Left cardiac atrium (tissue), 4 donors: ENCODE measurements at regions of chr13 and their contacts with region 1.

Region 1: DNA sequence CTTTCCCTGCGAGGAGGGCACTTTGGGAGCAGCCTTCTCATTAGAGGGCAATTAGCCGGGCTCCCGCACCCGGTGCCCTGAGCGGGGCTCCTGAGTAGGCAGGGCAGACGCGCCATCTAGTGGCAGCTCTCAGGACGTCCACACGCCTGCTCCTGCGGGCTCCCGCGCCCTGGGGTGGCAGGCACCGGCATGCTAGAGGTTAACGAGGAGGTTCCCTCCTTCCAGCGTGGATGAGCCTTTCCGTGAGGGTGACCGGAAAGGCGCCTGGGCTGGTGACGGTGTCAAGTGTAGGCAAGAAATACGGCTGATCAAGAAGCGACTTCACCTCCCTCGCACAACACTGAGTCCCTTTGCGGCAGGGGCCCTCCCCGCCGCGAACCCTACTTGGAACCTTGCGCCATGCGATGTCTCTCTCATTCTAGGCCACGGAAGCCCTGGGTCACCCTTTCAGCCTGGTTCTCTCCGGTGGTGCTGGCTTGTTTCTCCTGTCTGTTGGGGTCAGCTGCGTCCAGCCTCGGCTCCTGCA is 67.7 kb downstream of the ALOX5AP start:
- DNase-seq: peak; percentile 91
- ATAC-seq: peak; percentile 95 to 97

Region 2: GRCh38 chr13:30132623-30133553 is 670.1 kb before region 1 on chr13:
- intact Hi-C with region 1: loop called (anchors 2 to 10 kb)
- DNase-seq: peak; percentile 98
- ATAC-seq: peak; percentile 93 to 95

Region 3: GRCh38 chr13:30477346-30478195 is 325.4 kb before region 1 on chr13:
- intact Hi-C with region 1: loop called in 1 of 2 experiments (anchors 10 kb)
- DNase-seq: no peak
- ATAC-seq: no peak

Region 4: GRCh38 chr13:30673669-30674521 is 129.1 kb before region 1 on chr13:
- intact Hi-C with region 1: loop called (anchors 5 to 10 kb)
- DNase-seq: peak; percentile 90
- ATAC-seq: peak; percentile 95 to 96

Region 5: GRCh38 chr13:30679483-30680330 is 123.3 kb before region 1 on chr13:
- intact Hi-C with region 1: loop called (anchors 5 to 10 kb)
- DNase-seq: no peak
- ATAC-seq: peak; percentile 64 to 67

Region 6: DNA sequence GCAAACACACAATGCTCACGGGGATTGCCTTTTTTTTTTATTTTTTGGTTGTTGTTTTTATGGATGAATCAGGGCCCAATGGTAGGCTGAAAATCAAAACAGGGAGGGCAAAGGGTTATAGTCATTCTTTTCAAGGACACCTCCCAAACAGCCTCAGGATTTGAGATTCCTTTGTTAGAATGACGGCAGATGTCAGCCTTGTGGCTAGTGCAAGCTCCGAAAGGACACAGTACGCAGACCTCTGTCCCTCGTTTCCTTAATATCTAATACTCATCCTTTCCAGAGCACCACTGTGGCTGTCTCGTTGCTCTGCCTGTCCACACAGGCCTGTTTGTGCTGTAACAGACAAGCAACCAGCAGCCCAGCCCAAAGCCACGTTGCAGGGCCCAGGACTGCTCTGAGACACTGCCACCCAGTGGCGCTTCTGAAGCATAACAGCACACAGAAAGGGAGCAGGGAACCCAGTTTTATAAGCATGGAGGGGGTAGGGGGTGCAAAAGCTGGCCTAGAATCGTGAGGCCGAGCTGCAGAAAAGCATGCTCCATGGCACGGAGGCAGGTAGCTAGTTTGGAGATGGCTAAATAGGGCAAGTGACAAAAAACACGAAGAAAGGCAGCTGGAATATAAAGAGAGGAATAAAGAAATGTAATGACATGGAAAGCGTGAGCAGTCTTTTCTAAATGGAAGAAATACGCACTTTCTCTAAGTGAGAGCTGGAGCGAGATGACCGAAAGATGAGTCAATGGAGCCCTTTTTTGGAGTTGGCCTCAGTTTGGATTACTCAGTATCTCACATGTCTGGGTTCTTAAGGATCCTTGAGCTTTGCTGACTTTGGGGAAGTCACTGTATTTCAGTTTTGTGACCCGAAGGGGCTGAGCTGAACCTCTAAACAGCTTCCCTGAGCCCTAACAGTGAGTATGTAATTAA is 62.4 kb after region 1 on chr13:
- intact Hi-C with region 1: loop called in 1 of 2 experiments (anchors 5 kb)
- DNase-seq: peak; percentile 86
- ATAC-seq: peak; percentile 67 to 77

Region 7: DNA sequence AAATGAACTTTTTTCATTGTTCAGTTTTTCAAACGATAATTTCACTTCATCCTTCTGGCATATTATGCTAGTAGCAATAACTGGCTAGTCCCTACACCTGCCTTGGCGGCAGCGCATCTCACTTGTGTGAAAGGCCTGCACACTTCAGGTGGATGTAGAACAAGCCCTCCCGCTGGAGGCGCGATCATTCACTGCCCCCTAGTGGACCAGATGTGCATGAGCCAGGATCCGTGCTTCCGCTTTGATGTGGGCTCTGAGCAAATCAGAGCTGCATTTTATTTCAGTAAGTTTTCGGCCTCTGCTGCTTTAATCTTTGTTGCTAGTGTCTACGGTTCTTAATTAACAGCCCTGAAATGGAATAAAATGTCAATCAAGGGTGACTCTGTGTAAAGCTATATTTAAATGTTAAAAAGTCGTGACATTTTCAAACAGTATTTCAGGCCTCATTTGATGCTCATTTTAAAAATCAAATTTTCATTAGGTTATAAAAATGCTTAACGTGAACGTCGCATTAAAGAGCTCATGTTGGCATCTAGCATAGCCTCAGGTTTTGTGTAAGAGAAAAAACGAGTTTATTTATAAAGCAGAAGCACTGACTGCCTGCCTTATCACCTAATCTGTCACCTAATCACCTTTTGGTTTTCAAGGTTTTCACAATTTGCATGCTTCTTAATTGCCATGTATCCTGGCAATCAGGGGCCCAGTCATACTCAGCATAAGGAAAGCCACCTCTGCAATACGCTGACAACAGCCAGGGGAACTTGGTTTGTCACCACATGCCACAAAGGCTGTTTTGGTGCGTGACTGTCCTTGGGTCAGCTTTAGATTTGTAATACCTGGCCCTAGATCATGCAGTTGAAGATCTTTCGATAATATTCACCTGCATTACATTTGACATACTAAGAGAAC is 241.6 kb after region 1 on chr13:
- intact Hi-C with region 1: loop called in 1 of 2 experiments (anchors 5 kb)
- DNase-seq: peak; percentile 81
- ATAC-seq: peak; percentile 85 to 89